ENCODE measurements at regions of chr9 and their contacts with region 1.

Region 1: GRCh38 chr9:109974143-109974917 is 194.3 kb downstream of the PALM2AKAP2 start:
- DNase-seq: peak; percentile 63
- H3K4me3 Mint-ChIP-seq: no peak overlapping the region
- H3K27ac Mint-ChIP-seq: peak overlapping the region; percentile 62
- H3K4me1 Mint-ChIP-seq: peaks cover 78% of the 10 kb centered on the region
- H3K27me3 Mint-ChIP-seq: no peaks in the 10 kb centered on the region

Region 2: GRCh38 chr9:109574068-109574882 is 400.1 kb before region 1 on chr9:
- intact Hi-C with region 1: no loop called
- DNase-seq: no peak
- H3K4me3 Mint-ChIP-seq: no peak overlapping the region
- H3K27ac Mint-ChIP-seq: no peak overlapping the region
- H3K4me1 Mint-ChIP-seq: no peaks in the 10 kb centered on the region
- H3K27me3 Mint-ChIP-seq: peaks cover 25% of the 10 kb centered on the region

Region 3: GRCh38 chr9:109918339-109919163 is 55.8 kb before region 1 on chr9:
- intact Hi-C with region 1: loop called (anchors 1 kb)
- DNase-seq: peak; percentile 56
- H3K4me3 Mint-ChIP-seq: peak overlapping the region; percentile 84
- H3K27ac Mint-ChIP-seq: peak overlapping the region; percentile 100
- H3K4me1 Mint-ChIP-seq: peaks cover 61% of the 10 kb centered on the region
- H3K27me3 Mint-ChIP-seq: no peaks in the 10 kb centered on the region

Region 4: DNA sequence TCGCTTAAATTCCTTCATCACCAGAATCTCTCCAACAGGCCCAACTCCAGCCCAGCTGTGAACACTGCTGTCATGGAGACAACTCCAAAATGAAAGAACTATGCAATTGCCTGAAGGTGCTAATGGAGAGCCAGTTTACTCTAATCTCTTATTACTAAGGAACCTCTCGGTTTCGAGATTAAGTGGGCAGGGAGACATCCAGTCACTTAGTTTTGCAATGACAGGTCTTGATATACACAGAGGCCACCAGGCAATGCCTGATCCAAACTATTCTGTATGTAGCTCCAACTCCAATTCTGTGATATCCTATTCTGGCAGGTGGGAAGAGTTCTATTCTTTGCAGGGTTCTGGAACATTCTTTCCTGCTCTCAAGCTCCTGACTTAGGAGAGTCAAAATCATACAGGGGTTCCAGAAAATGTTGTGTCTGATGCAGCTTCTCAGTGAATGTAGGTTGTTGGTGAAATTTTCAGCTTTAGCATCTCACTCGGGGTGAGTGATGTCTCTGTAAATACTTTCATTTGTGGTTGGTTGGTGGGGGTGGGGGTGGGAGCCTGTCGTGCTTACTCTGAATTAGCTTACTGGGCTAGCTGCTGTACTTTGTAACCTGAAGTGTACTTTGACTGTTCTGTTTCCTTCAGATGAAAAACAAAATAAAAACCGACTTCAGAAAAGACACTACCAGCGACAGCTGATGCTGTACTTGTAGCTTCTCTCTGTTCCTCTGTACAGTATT is 23.5 kb before region 1 on chr9:
- intact Hi-C with region 1: loop called (anchors 1 kb)
- DNase-seq: no peak
- H3K4me3 Mint-ChIP-seq: peak overlapping the region; percentile 57
- H3K27ac Mint-ChIP-seq: peak overlapping the region; percentile 93
- H3K4me1 Mint-ChIP-seq: peaks cover 43% of the 10 kb centered on the region
- H3K27me3 Mint-ChIP-seq: no peaks in the 10 kb centered on the region

Region 5: GRCh38 chr9:110015759-110016158 is 41.4 kb after region 1 on chr9:
- intact Hi-C with region 1: loop called (anchors 1 kb)
- DNase-seq: no peak
- H3K4me3 Mint-ChIP-seq: no peak overlapping the region
- H3K27ac Mint-ChIP-seq: peak overlapping the region; percentile 76
- H3K4me1 Mint-ChIP-seq: peaks cover 21% of the 10 kb centered on the region
- H3K27me3 Mint-ChIP-seq: peaks cover 2% of the 10 kb centered on the region

Region 6: GRCh38 chr9:110048403-110048975 is 74.2 kb after region 1 on chr9:
- intact Hi-C with region 1: loop called (anchors 1 kb)
- DNase-seq: peak; percentile 85
- H3K4me3 Mint-ChIP-seq: peak overlapping the region; percentile 94
- H3K27ac Mint-ChIP-seq: peak overlapping the region; percentile 94
- H3K4me1 Mint-ChIP-seq: peaks cover 42% of the 10 kb centered on the region
- H3K27me3 Mint-ChIP-seq: no peaks in the 10 kb centered on the region

Region 7: GRCh38 chr9:110081395-110081794 is 107.1 kb after region 1 on chr9:
- intact Hi-C with region 1: no loop called
- DNase-seq: no peak
- H3K4me3 Mint-ChIP-seq: no peak overlapping the region
- H3K27ac Mint-ChIP-seq: peak overlapping the region; percentile 62
- H3K4me1 Mint-ChIP-seq: peaks cover 56% of the 10 kb centered on the region
- H3K27me3 Mint-ChIP-seq: no peaks in the 10 kb centered on the region

Region 8: GRCh38 chr9:110110154-110110553 is 135.8 kb after region 1 on chr9:
- intact Hi-C with region 1: no loop called
- DNase-seq: no peak
- H3K4me3 Mint-ChIP-seq: no peak overlapping the region
- H3K27ac Mint-ChIP-seq: no peak overlapping the region
- H3K4me1 Mint-ChIP-seq: peaks cover 23% of the 10 kb centered on the region
- H3K27me3 Mint-ChIP-seq: no peaks in the 10 kb centered on the region

Region 9: DNA sequence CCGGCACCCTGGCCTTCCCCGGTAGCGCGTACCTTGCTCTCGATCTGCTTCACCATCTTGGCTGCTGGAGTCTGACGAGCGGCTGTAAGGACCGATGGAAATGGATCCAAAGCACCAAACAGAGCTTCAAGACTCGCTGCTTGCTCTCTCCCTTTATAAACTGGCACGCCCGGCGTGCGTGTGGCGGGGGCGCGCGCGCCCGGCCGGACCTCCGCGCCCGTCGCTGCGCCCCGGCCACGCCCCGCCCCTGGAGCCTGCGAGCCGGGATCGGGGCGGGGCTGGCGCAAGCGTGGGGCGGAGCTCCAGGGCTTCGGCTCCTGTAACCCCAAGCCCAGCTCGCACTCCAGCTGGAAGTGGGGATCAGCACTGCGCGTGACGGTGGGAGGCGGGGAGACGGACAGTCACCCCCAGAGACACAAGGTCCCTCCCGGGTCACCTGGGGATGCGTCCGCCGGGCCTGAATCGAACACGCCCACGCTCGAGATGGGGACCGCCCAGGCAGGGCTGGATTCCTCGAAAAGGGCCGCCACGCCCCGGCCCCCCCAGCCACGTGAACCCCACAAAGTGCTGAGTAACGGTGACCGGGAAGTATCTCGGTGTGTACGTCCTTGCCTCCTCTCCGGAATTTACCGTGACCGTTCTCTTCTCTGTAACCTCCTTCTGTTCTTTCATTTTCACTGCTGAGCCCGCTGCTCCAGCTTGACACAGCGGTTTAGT is 282.2 kb after region 1 on chr9 and contains the start of gene TXN:
- intact Hi-C with region 1: loop called (anchors 1 kb)
- DNase-seq: peak; percentile 82
- H3K4me3 Mint-ChIP-seq: peak within 1 kb of the TSS; percentile 95
- H3K27ac Mint-ChIP-seq: peak within 1 kb of the TSS; percentile 99
- H3K4me1 Mint-ChIP-seq: peaks cover 49% of the 10 kb centered on the region
- H3K27me3 Mint-ChIP-seq: no peaks in the 10 kb centered on the region
- total RNA-seq, gene TXN: 539 and 551 TPM in 2 replicates

Measured in activated T-helper 2 cell treated with anti-CD3 and anti-CD28 coated beads, Interferon-gamma antibody, Interleukin-2, Interleukin-4, amounts not matched to agents 10 μg/mL and 5 μg/mL and 100 μg/mL, durations not matched to agents 14 hours and 24 hours and 36 hours (primary cell).